H1 (cell line): ENCODE measurements at regions of chr4 and their contacts with region 1.

Region 1: GRCh38 chr4:81069706-81070331 is 39.3 kb downstream of the BMP3 start:
- DNase-seq: peak; percentile 66 to 70
- H3K4me3 ChIP-seq: no peak overlapping the region
- H3K27ac ChIP-seq: no peak overlapping the region
- H3K4me1 ChIP-seq: no peaks in the 10 kb centered on the region
- H3K27me3 ChIP-seq: no peaks in the 10 kb centered on the region
- CTCF ChIP-seq: peak; percentile 23 to 94 (median 92)
- EP300 ChIP-seq: no peak
- POLR2A ChIP-seq: no peak
- RAD21 ChIP-seq: peak; percentile 95 to 96

Region 2: DNA sequence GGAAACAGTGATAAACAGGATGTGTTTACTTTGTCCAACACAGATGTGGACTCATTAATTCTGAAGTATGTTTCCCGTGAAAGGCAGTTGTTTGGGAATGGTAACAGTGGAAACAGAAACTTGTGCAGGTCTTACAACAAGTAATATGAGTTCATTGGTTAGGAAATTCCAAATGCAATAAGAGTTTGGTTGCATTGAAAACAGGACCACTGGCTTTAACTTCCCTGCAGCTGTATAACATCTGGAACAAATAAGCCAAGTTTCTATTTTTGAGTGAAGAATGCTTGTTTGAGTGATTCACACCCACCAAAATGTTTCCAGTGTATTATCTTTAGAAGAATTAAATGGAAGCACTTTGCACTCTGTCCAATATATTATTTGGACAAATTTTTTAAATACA is 121.7 kb before region 1 on chr4:
- CTCF ChIA-PET with region 1: no interaction called
- POLR2A ChIA-PET with region 1: no interaction called
- DNase-seq: no peak
- H3K4me3 ChIP-seq: no peak overlapping the region
- H3K27ac ChIP-seq: no peak overlapping the region
- H3K4me1 ChIP-seq: no peaks in the 10 kb centered on the region
- H3K27me3 ChIP-seq: no peaks in the 10 kb centered on the region
- CTCF ChIP-seq: no peak
- EP300 ChIP-seq: no peak
- POLR2A ChIP-seq: no peak
- RAD21 ChIP-seq: no peak

Region 3: GRCh38 chr4:81003597-81004111 is 66.2 kb before region 1 on chr4:
- CTCF ChIA-PET with region 1: no interaction called
- POLR2A ChIA-PET with region 1: no interaction called
- DNase-seq: no peak
- H3K4me3 ChIP-seq: no peak overlapping the region
- H3K27ac ChIP-seq: no peak overlapping the region; the same call in 1 of the 2 replicates
- H3K4me1 ChIP-seq: 0 out of 7 replicates have a peak, but pooled peaks cover 0 to 3% (median 0%) of the 10 kb centered on the region in 4 experiments
- H3K27me3 ChIP-seq: no peaks in the 10 kb centered on the region
- CTCF ChIP-seq: no peak
- EP300 ChIP-seq: no peak
- POLR2A ChIP-seq: no peak
- RAD21 ChIP-seq: no peak

Region 4: GRCh38 chr4:81214881-81215868 is 145.4 kb after region 1 on chr4 and contains the start of gene PRKG2:
- CTCF ChIA-PET with region 1: interaction called, 13 read pairs
- POLR2A ChIA-PET with region 1: no interaction called
- DNase-seq: peak in 1 of 2 experiments; percentile 69
- H3K4me3 ChIP-seq: peak within 1 kb of the TSS; percentile 52 to 67 (median 60)
- H3K27ac ChIP-seq: no peak within 1 kb of the TSS
- H3K4me1 ChIP-seq: peaks cover 0 to 3% (median 1%) of the 10 kb centered on the region in 4 experiments; a peak in 3 of 7 replicates
- H3K27me3 ChIP-seq: peaks cover 22 to 43% (median 39%) of the 10 kb centered on the region in 4 experiments
- CTCF ChIP-seq: no peak
- EP300 ChIP-seq: no peak
- POLR2A ChIP-seq: no peak
- RAD21 ChIP-seq: no peak
- total RNA-seq, gene PRKG2: 1.2 and 1.5 TPM in 2 replicates